ENCODE measurements at regions of chr10 and their contacts with region 1.

Region 1: DNA sequence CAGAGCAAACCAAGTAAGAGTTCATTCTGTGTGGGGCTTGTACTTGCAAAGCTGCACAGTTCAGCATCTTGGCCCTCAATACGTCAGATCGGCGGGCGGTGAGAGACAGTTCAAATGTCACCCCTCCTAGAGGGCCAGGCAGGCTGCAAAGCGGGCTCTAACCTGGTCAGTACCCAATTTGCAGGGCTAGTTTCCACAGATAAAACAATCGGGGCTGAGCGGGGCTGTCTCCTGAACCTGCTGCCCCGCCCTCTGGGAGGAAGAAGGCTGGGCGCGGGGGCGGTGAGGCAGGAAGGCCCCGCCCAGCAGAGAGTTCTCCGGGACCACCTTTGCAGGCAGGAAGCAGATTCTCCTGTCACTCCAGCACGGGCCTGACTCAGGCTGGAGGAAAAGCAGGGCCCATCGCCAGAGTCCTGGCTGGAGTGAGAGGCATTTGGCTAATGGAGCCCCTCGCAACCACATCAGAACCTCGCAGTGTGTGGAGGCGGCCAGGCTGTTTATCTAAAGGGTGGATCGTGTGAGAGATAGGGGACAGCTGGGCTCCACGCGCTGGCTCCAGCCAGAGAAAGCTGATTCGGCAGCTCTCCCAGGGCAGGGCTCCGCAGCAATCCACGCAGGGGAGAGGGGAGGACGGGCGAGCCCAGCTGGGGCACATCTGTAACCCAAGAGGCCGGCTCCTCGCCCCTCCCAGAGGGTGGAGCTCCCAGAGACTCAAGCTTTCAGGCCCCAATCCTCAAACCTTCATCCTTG is 83.1 kb downstream of the SH3PXD2A start:
- DNase-seq: peak; percentile 47 to 64 (median 56)
- H3K4me3 ChIP-seq: peak overlapping the region; percentile 83 to 87
- H3K4me3 Mint-ChIP-seq: peak overlapping the region; percentile 88 to 95 (median 92)
- H3K27ac ChIP-seq: peak overlapping the region; percentile 59
- H3K27ac Mint-ChIP-seq: peak overlapping the region; percentile 65 to 93 (median 91)
- H3K4me1 ChIP-seq: peaks cover 31% of the 10 kb centered on the region
- H3K4me1 Mint-ChIP-seq: peaks cover 25 to 54% (median 34%) of the 10 kb centered on the region in 4 donors
- H3K27me3 ChIP-seq: no peaks in the 10 kb centered on the region
- H3K27me3 Mint-ChIP-seq: no peaks in the 10 kb centered on the region

Region 2: GRCh38 chr10:103433858-103434257 is 338.4 kb before region 1 on chr10:
- CTCF ChIA-PET with region 1: no interaction called
- POLR2A ChIA-PET with region 1: no interaction called
- intact Hi-C with region 1: no loop called
- DNase-seq: no peak
- H3K4me3 ChIP-seq: no peak overlapping the region
- H3K4me3 Mint-ChIP-seq: no peak overlapping the region
- H3K27ac ChIP-seq: no peak overlapping the region
- H3K27ac Mint-ChIP-seq: peak overlapping the region in 2 of 7 donors; percentile 27 to 72
- H3K4me1 ChIP-seq: peaks cover 25% of the 10 kb centered on the region
- H3K4me1 Mint-ChIP-seq: peaks cover 14 to 41% (median 24%) of the 10 kb centered on the region in 4 donors
- H3K27me3 ChIP-seq: no peaks in the 10 kb centered on the region
- H3K27me3 Mint-ChIP-seq: no peaks in the 10 kb centered on the region

Region 3: GRCh38 chr10:103745341-103746227 is 26.7 kb before region 1 on chr10:
- CTCF ChIA-PET with region 1: interaction called, 88 read pairs
- POLR2A ChIA-PET with region 1: interaction called, 168 read pairs
- intact Hi-C with region 1: loop called (anchors 1 kb)
- DNase-seq: peak; percentile 34 to 76 (median 38)
- H3K4me3 ChIP-seq: peak overlapping the region in 1 of 2 donors; percentile 15
- H3K4me3 Mint-ChIP-seq: peak overlapping the region in 5 of 8 donors; percentile 31 to 75 (median 55)
- H3K27ac ChIP-seq: no peak overlapping the region
- H3K27ac Mint-ChIP-seq: peak overlapping the region; percentile 53 to 95 (median 77)
- H3K4me1 ChIP-seq: peaks cover 45% of the 10 kb centered on the region
- H3K4me1 Mint-ChIP-seq: peaks cover 23 to 54% (median 38%) of the 10 kb centered on the region in 4 donors
- H3K27me3 ChIP-seq: no peaks in the 10 kb centered on the region
- H3K27me3 Mint-ChIP-seq: no peaks in the 10 kb centered on the region

Region 4: GRCh38 chr10:103752680-103753248 is 19.5 kb before region 1 on chr10:
- CTCF ChIA-PET with region 1: interaction called, 88 read pairs
- POLR2A ChIA-PET with region 1: interaction called, 168 read pairs
- intact Hi-C with region 1: no loop called
- DNase-seq: no peak
- H3K4me3 ChIP-seq: no peak overlapping the region
- H3K4me3 Mint-ChIP-seq: no peak overlapping the region
- H3K27ac ChIP-seq: no peak overlapping the region
- H3K27ac Mint-ChIP-seq: no peak overlapping the region
- H3K4me1 ChIP-seq: peaks cover 22% of the 10 kb centered on the region
- H3K4me1 Mint-ChIP-seq: peaks cover 12 to 28% (median 25%) of the 10 kb centered on the region in 4 donors
- H3K27me3 ChIP-seq: no peaks in the 10 kb centered on the region
- H3K27me3 Mint-ChIP-seq: no peaks in the 10 kb centered on the region

Region 5: GRCh38 chr10:103759100-103759781 is 13.0 kb before region 1 on chr10:
- CTCF ChIA-PET with region 1: interaction called, 88 read pairs
- POLR2A ChIA-PET with region 1: interaction called, 168 read pairs
- intact Hi-C with region 1: no loop called
- DNase-seq: peak in 4 of 5 donors; percentile 24 to 44 (median 31)
- H3K4me3 ChIP-seq: peak overlapping the region in 1 of 2 donors; percentile 1
- H3K4me3 Mint-ChIP-seq: peak overlapping the region in 6 of 8 donors; percentile 51 to 76 (median 70)
- H3K27ac ChIP-seq: no peak overlapping the region
- H3K27ac Mint-ChIP-seq: peak overlapping the region; percentile 70 to 87 (median 79)
- H3K4me1 ChIP-seq: peaks cover 64% of the 10 kb centered on the region
- H3K4me1 Mint-ChIP-seq: peaks cover 33 to 67% (median 52%) of the 10 kb centered on the region in 4 donors
- H3K27me3 ChIP-seq: no peaks in the 10 kb centered on the region
- H3K27me3 Mint-ChIP-seq: no peaks in the 10 kb centered on the region

Region 6: GRCh38 chr10:103859161-103860086 is 87.2 kb after region 1 on chr10:
- CTCF ChIA-PET with region 1: interaction called, 3 read pairs
- POLR2A ChIA-PET with region 1: no interaction called
- intact Hi-C with region 1: loop called (anchors 5 kb)
- DNase-seq: peak; percentile 51 to 58 (median 54)
- H3K4me3 ChIP-seq: no peak overlapping the region
- H3K4me3 Mint-ChIP-seq: peak overlapping the region in 1 of 8 donors; percentile 15
- H3K27ac ChIP-seq: no peak overlapping the region
- H3K27ac Mint-ChIP-seq: no peak overlapping the region
- H3K4me1 ChIP-seq: peaks cover 13% of the 10 kb centered on the region
- H3K4me1 Mint-ChIP-seq: peaks cover 5 to 12% (median 8%) of the 10 kb centered on the region in 4 donors
- H3K27me3 ChIP-seq: peaks cover 8% of the 10 kb centered on the region
- H3K27me3 Mint-ChIP-seq: peaks cover 5 to 13% of the 10 kb centered on the region in 2 donors

Measured in CD4-positive, alpha-beta memory T cell (primary cell).